ENCODE measurements at regions of chr3 and their contacts with region 1.

Region 1: DNA sequence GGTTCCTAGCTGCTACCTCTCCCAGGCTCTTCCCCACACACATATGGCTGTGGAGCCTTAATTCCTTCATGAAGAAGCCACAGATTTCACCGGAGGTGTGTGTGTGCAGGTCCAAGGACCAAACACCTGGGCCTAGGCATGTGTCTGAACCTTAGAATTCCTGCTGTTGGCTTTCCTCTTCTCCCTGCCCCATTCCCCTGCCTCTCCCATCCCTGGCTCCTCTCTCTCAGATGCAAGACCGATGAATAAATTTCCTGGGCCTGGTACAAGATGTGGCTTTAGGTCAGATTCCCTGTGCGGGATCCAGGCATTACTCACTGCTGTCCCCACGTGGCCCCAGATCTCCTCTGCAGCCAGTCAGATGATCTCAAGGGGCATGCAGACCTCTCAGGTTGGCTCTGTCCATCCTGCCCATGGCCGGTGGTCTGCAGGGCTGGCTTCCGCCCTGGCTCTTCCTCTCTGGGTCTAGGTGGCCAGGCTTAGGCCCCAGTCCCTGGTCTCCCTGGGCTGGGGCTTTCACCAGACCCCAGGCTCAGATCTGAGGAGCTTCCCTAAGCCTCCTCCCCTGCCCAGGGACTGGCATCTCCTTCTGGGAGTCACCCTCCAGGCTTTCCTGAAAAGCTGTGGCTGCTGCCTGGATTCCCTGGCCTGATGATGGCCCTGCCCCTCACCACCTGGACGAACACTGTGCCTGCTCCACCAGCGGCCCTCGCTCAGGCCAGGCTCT is 20.5 kb downstream of the CCR9 start:
- DNase-seq: peak; percentile 24
- H3K4me3 ChIP-seq: no peak overlapping the region
- H3K27ac ChIP-seq: no peak overlapping the region
- H3K4me1 ChIP-seq: no peaks in the 10 kb centered on the region
- CTCF ChIP-seq: peak; percentile 66

Region 2: DNA sequence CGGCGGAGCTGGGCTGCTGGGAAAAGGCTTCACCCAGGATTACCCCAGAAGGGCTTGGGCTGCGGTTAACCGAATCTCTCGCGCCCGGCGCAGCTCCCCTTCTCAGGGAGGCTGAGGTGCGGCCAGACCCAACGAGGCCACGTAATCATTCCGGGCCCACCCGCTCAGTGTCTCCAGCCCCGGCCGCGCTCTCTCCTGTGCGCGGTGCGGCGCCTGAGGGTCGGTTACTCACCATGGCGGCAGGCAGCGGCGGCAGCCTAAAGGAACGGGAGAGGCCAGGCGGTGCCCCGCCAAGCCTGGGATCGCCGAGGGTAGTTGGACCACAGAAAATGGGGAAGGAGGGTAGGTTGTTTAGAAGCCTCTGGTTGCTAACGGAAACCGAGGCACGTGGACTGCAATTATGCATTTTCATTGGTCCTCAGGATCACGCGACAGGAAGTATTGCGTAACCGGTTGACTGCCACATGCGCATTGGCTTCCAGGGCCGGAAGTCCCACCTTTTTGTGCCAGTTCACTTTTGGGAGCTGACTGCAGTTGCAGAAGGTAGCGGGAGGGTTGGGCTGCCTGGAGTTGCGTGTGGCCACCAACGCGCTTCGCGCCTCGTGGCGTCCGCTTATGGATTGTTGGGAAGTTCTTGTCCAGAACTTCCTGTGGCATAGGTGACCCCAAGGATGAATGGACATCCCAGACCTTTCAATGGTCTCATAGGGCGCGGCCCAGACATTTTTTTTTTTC is 64.9 kb before region 1 on chr3 and contains the start of gene LZTFL1:
- CTCF ChIA-PET with region 1: no interaction called
- POLR2A ChIA-PET with region 1: no interaction called
- intact Hi-C with region 1: loop called (anchors 5 kb)
- DNase-seq: peak; percentile 86
- H3K4me3 ChIP-seq: peak within 1 kb of the TSS; percentile 72
- H3K27ac ChIP-seq: no peak within 1 kb of the TSS
- H3K4me1 ChIP-seq: peaks cover 6% of the 10 kb centered on the region
- CTCF ChIP-seq: no peak
- total RNA-seq, gene LZTFL1: 3.2 and 4.5 TPM in 2 replicates

Region 3: DNA sequence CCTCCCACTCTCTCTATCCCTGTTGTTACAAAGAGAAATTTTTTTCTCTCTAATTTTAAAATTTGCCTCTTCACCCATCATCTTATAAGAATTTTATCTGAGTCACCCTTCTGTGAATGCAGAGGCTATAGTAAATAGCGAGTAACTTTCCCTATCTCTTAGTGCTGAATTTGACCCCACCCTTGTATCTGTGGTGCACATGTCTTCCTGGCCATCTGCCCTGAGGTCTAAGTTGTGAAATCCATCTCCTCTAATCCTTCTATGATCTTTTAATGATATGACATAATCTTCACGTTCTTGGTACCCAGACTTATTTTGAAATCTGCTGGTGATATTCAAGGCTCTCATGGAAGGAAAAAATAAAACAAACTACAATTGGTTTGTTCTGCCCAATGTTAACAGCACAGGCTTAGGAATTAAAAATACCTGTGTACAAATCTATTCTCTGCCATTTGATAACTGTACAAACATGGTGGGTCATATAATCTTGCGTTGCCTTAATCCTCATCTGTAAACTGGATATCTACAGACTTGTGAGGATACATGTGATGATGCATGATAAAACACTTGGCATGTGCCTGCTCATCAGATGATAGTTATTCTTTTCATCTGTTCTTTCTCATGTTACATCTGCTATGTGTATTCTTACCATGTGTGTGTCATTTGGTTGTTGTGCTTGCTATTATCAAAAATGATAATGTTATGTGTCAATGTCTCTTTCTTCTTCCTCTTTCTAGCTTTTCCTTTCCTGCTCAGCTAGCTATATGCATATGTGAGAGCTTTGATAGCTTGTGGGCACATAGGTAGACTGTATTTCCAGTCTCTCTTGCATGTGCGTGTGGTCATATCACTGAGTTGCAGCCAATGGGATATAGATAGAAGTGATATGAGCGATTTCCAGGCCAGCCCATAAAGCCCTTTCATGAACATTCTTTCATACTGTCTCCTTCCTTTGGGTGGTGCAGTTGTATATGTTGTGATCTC is 321.7 kb after region 1 on chr3:
- CTCF ChIA-PET with region 1: no interaction called
- POLR2A ChIA-PET with region 1: no interaction called
- intact Hi-C with region 1: no loop called
- DNase-seq: no peak
- H3K4me3 ChIP-seq: no peak overlapping the region
- H3K27ac ChIP-seq: no peak overlapping the region
- H3K4me1 ChIP-seq: no peaks in the 10 kb centered on the region
- CTCF ChIP-seq: no peak

Measured in OCI-LY7 (cell line).